Left ventricle myocardium inferior (tissue), 1 donor: ENCODE measurements at regions of chr6 and their contacts with region 1.

Region 1: GRCh38 chr6:152642989-152643388 is 5.8 kb upstream of the SYNE1 start:
- DNase-seq: peak; percentile 52
- H3K4me3 ChIP-seq: no peak overlapping the region
- H3K27ac ChIP-seq: no peak overlapping the region
- H3K4me1 ChIP-seq: peaks cover 2% of the 10 kb centered on the region
- H3K27me3 ChIP-seq: peaks cover 6% of the 10 kb centered on the region
- CTCF ChIP-seq: peak; percentile 75

Region 2: DNA sequence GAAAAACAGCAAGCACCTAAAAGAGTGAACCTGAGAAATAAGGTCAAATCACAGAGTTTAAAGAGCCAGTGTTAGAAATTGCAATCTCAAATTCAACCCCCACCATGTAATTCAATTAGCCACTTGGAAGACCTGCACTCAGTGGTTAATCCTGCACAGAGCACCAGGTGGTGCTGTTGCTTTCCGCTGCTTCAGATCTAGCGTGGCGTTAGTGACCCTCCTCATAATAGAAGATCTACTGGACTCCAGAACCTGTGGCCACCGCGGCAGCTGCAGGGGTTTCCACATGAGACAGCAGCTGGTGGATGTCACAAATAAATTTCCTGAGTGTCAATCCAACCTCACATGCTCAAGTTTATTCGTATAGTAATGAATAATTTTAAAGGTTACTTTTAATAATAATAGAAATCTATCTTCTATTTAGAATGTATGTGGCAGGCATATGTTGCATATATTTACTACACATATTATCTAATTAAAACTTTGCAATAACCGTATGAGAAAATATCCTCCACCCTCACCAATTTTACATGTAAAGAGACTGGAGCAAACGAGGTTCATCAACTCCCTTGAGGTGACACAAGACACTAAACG is 90.3 kb before region 1 on chr6:
- intact Hi-C with region 1: loop called (anchors 2 kb)
- DNase-seq: peak; percentile 57
- H3K4me3 ChIP-seq: no peak overlapping the region
- H3K27ac ChIP-seq: no peak overlapping the region
- H3K4me1 ChIP-seq: no peaks in the 10 kb centered on the region
- H3K27me3 ChIP-seq: no peaks in the 10 kb centered on the region
- CTCF ChIP-seq: peak; percentile 89